ENCODE measurements at regions of chr4 and their contacts with region 1.

Region 1: GRCh38 chr4:75916091-75916661 is 13.9 kb upstream of the PPEF2 start:
- DNase-seq: no peak
- ATAC-seq: peak; percentile 94
- H3K4me3 Mint-ChIP-seq: no peak overlapping the region
- H3K27ac Mint-ChIP-seq: no peak overlapping the region
- H3K4me1 Mint-ChIP-seq: peaks cover 16% of the 10 kb centered on the region
- H3K27me3 Mint-ChIP-seq: no peaks in the 10 kb centered on the region
- CTCF ChIP-seq: peak; percentile 72

Region 2: GRCh38 chr4:75930152-75930551 is 14.0 kb after region 1 on chr4:
- CTCF ChIA-PET with region 1: interaction called, 21 read pairs
- POLR2A ChIA-PET with region 1: no interaction called
- DNase-seq: no peak
- ATAC-seq: no peak
- H3K4me3 Mint-ChIP-seq: no peak overlapping the region
- H3K27ac Mint-ChIP-seq: no peak overlapping the region
- H3K4me1 Mint-ChIP-seq: peaks cover 3% of the 10 kb centered on the region
- H3K27me3 Mint-ChIP-seq: no peaks in the 10 kb centered on the region
- CTCF ChIP-seq: no peak

Region 3: DNA sequence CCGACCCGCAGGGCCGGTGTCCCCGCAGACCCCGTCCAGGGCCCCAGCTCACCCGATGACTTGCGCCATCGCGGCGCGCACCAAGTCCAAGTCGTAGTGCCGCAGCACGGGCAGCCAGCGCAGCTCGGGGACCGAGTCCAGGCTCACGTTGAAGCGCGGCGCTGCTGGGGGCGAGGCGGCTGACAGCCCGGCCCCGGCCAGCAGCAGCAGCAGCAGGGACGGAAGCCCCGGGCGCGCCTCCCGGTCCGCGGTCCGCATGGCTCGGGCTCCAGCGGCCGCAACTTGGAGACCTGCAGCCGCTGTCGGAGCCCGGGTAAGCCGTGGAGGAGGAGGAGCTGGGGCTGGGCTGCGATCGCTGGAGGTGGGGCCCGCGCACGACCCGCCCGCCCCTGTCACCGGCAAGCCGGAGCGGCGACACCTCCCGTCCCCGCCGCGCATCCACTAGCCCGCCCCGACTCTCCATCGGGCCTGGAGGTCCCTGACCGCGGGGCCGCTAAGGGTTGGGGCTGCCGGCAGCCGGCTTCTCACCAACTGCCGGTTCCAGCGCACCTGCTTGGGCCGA is 24.6 kb after region 1 on chr4 and contains the start of gene NAAA:
- CTCF ChIA-PET with region 1: interaction called, 37 read pairs
- POLR2A ChIA-PET with region 1: no interaction called
- DNase-seq: peak; percentile 81
- ATAC-seq: peak; percentile 77
- H3K4me3 Mint-ChIP-seq: peak within 1 kb of the TSS; percentile 92
- H3K27ac Mint-ChIP-seq: no peak within 1 kb of the TSS
- H3K4me1 Mint-ChIP-seq: peaks cover 22% of the 10 kb centered on the region
- H3K27me3 Mint-ChIP-seq: peaks cover 16% of the 10 kb centered on the region; the same call in 1 of the 2 replicates
- CTCF ChIP-seq: no peak
- total RNA-seq, gene NAAA: 7.1 to 9.0 TPM (median 8.2 TPM) in 3 replicates

Region 4: DNA sequence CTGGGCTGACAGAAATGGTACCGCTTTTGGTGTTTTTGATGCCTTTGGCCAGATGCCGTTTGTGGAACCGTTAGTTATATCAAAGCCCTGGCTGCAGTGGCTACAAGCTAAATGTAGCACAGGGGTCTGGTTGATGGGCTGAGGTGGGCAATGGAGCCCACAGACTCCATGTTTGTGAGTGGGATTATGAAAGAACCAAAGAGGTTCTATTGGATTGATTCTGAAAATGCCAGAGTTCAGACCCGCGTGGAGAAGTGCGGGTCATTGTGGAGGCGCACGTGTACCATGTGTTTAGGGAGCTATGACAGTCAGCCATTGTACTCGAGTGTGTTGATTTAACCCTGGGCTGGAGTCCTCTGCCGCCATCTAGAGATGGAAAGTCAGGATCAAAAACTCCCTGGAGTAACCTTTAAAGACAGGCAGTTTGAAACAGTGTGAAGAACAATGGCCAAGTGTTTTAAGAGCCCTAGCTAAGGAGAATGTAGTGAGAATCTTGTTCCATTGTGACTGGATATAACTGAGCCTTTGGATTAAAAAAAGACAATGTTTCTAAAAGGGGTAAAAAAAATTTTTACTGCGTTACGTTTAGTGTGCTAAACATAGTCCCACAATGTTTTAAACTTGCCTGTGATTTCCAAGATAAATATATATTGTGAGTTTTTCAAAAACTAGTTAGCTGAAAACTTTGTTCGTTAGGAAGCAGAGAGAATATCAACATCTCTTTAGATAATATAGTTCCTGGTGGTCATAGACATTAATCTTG is 171.0 kb after region 1 on chr4:
- CTCF ChIA-PET with region 1: interaction called, 30 read pairs
- POLR2A ChIA-PET with region 1: no interaction called
- DNase-seq: peak; percentile 56
- ATAC-seq: peak; percentile 99
- H3K4me3 Mint-ChIP-seq: peak overlapping the region; percentile 42
- H3K27ac Mint-ChIP-seq: no peak overlapping the region
- H3K4me1 Mint-ChIP-seq: peaks cover 6% of the 10 kb centered on the region
- H3K27me3 Mint-ChIP-seq: no peaks in the 10 kb centered on the region
- CTCF ChIP-seq: no peak

Region 5: DNA sequence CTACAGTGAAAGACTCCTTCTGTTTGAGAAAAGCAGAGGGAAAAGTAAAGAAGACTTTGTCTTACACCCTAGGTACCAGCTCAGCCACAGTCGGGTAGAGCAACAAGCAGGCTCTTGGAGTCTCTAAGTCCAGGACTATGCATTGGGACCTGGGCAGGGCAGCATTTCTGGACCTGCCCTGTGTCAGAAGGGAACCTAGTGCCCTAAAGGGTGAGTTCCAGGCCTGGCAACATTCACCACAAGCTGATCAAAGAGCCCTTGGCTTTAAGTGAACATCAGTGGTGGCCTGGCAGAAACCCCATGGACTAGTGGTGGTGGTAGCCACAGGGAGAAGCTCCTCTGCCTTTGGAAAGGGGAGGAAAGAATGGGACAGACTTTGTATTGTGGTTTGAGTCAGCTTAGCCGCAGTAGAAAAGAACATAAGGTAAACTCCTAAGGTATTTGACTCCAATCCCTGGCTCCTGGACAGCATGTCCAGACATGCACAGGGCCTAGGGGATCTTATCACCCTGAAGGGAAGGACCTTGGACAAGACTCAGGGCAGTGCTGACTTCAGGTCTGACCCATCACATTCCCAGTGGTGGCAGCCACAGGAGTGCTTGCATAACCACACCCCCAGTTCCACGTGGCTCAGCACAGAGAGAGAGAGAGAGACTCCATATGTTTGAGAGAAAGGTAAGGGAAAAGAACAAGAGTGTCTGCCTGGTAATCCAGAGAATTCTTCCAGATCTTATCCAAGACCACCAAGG is 472.2 kb after region 1 on chr4:
- CTCF ChIA-PET with region 1: no interaction called
- POLR2A ChIA-PET with region 1: no interaction called
- DNase-seq: no peak
- ATAC-seq: peak; percentile 73
- H3K4me3 Mint-ChIP-seq: no peak overlapping the region
- H3K27ac Mint-ChIP-seq: no peak overlapping the region
- H3K4me1 Mint-ChIP-seq: peaks cover 45% of the 10 kb centered on the region
- H3K27me3 Mint-ChIP-seq: no peaks in the 10 kb centered on the region
- CTCF ChIP-seq: no peak